Tibial artery (tissue), 4 donors: ENCODE measurements at regions of chr1 and their contacts with region 1.

Region 1: DNA sequence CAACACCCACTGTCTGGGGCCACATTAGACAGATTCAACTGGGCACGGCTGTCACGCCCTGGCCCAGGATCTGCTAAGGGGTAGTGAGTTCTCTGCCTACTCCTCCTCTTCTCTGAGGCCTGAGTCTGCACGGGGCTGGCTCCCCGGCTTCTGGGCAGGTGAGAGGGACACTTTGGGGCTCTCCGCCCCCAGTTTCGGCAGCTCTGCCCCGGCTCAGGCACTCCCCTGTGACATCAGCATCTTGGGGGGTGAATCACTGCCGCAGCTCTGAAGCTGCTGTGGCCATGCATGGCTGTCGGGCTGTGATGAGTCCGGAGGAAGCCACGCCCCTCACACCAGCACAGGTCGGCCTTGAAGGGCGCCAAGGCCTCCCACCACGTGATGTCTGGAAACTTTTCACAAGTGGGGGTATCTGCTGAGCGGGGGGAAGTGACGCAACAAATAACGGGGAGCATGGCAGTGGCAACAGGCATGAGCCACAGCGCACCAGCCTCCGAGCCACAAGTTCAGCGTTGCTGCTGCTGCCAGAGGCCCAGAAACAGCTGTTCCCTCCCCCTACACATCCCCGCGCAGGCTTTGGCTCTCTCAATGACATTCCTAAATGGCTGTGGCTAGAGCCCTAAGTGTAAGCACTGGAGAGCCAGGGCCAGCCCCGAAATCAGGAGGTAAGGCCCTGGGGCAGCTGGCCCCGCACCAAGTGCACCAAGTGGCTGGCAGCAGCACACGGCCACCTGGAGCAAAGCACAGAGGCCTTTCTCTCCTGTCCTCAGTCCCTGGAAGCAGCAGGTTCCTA is 26.3 kb downstream of the ZBTB17 start:
- DNase-seq: peak; percentile 96 to 99
- H3K4me3 ChIP-seq: peak overlapping the region; percentile 33 to 43
- H3K27ac ChIP-seq: peak overlapping the region; percentile 95 to 96
- H3K4me1 ChIP-seq: peaks cover 11 to 84% (median 70%) of the 10 kb centered on the region in 4 donors
- H3K27me3 ChIP-seq: no peaks in the 10 kb centered on the region
- CTCF ChIP-seq: no peak

Region 2: DNA sequence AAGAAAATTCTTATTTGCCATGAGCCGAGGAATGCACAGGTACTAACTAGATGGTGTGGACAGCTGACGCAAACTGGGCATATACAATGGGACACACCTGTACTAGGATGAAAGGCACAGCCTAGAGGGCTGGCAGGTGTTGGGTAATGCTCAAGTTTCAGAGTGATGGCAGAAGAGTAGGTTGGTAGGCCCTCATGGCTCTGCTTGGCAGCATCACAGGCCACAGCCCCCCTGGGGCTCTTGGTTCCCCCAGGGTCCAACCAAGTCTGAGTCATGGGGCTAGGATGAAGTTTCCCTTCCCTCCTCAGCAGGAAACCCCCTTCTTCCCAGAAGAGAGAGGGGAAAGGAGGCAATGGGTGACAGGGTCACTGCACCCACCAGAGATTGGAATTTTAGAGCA is 67.0 kb before region 1 on chr1:
- intact Hi-C with region 1: no loop called
- DNase-seq: no peak
- H3K4me3 ChIP-seq: no peak overlapping the region
- H3K27ac ChIP-seq: peak overlapping the region in 1 of 2 donors; percentile 81
- H3K4me1 ChIP-seq: peaks cover 0 to 90% (median 54%) of the 10 kb centered on the region in 4 donors
- H3K27me3 ChIP-seq: no peaks in the 10 kb centered on the region
- CTCF ChIP-seq: no peak

Region 3: GRCh38 chr1:15899266-15899665 is 50.4 kb before region 1 on chr1:
- intact Hi-C with region 1: loop called (anchors 10 kb)
- DNase-seq: no peak
- H3K4me3 ChIP-seq: no peak overlapping the region
- H3K27ac ChIP-seq: peak overlapping the region in 1 of 2 donors; percentile 58
- H3K4me1 ChIP-seq: peaks cover 0 to 89% (median 33%) of the 10 kb centered on the region in 4 donors
- H3K27me3 ChIP-seq: no peaks in the 10 kb centered on the region
- CTCF ChIP-seq: no peak

Region 4: DNA sequence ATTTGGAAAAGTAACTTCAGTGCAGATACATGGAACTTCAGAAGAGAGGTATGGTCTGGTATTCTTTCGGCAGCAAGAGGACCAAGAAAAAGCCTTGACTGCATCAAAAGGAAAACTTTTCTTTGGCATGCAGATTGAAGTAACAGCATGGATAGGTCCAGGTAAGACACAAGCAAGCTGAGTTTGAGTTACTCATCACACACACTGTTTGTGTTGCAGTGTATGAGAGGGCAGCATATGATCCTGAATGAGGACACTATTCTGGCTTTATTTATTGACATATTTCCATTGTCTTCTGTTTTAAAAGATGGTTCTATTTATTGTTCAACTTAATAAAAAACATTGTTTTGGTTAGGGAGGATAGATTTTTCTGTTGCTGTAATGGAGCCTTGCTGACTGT is 38.5 kb before region 1 on chr1:
- intact Hi-C with region 1: loop called (anchors 5 kb)
- DNase-seq: no peak
- H3K4me3 ChIP-seq: no peak overlapping the region
- H3K27ac ChIP-seq: no peak overlapping the region
- H3K4me1 ChIP-seq: peaks cover 0 to 36% (median 5%) of the 10 kb centered on the region in 4 donors
- H3K27me3 ChIP-seq: no peaks in the 10 kb centered on the region
- CTCF ChIP-seq: no peak